ENCODE measurements at regions of chr2 and their contacts with region 1.

Region 1: GRCh38 chr2:23926750-23927571 is at the start of gene ATAD2B:
- DNase-seq: peak; percentile 96
- H3K4me3 ChIP-seq: peak within 1 kb of the TSS; percentile 89
- H3K27ac ChIP-seq: peak within 1 kb of the TSS; percentile 76
- H3K4me1 ChIP-seq: peaks cover 37% of the 10 kb centered on the region
- CTCF ChIP-seq: peak; percentile 80
- total RNA-seq, gene ATAD2B: 7.8 and 9.4 TPM in 2 replicates

Region 2: GRCh38 chr2:23824777-23825212 is 102.2 kb before region 1 on chr2:
- CTCF ChIA-PET with region 1: interaction called, 11 read pairs
- POLR2A ChIA-PET with region 1: interaction called, 32 read pairs
- intact Hi-C with region 1: loop called (anchors 1 kb)
- DNase-seq: peak; percentile 73
- H3K4me3 ChIP-seq: no peak overlapping the region
- H3K27ac ChIP-seq: no peak overlapping the region
- H3K4me1 ChIP-seq: peaks cover 7% of the 10 kb centered on the region
- CTCF ChIP-seq: peak; percentile 93

Region 3: GRCh38 chr2:23939987-23940717 is 13.2 kb after region 1 on chr2 and contains the start of gene UBXN2A:
- CTCF ChIA-PET with region 1: interaction called, 15 read pairs
- POLR2A ChIA-PET with region 1: interaction called, 50 read pairs
- intact Hi-C with region 1: loop called (anchors 1 kb)
- DNase-seq: peak; percentile 89
- H3K4me3 ChIP-seq: peak within 1 kb of the TSS; percentile 72
- H3K27ac ChIP-seq: peak within 1 kb of the TSS; percentile 73
- H3K4me1 ChIP-seq: peaks cover 18% of the 10 kb centered on the region
- CTCF ChIP-seq: no peak
- total RNA-seq, gene UBXN2A: 10.0 and 11.3 TPM in 2 replicates

Region 4: DNA sequence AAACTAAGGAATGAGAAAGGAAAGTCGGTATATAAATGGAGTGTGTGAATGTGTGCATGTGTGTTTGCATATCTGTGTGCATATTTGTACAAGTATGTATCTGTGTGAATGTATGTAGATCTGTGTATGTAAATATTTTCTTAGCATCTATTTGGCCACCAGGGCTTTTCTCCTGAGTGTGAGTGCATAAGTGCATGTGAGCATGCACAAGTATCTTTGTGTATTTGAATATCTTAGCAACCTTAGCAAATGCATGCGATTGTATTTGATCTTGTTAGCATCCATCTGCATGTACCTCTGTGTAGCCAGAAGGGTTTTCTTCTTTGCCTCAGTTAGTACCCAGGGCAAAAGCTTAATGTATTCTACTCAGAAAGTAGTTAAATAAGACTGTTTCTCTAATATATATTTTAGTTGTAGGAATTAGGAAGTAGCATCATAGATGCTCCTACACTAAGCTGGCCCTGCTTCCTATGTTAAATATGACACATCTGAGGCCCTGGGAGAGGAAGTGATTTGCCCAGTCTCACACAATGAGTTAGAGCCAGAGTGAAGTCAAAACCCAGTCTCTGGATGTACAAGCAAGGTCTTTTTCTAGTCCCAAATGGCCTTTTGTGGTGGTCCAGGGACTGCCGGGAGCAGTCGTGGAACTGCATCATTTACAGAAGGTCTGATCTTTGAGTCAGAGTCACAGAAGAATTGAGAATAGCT is 131.8 kb after region 1 on chr2:
- CTCF ChIA-PET with region 1: no interaction called
- POLR2A ChIA-PET with region 1: no interaction called
- intact Hi-C with region 1: loop called (anchors 5 kb)
- DNase-seq: no peak
- H3K4me3 ChIP-seq: no peak overlapping the region
- H3K27ac ChIP-seq: no peak overlapping the region
- H3K4me1 ChIP-seq: no peaks in the 10 kb centered on the region
- CTCF ChIP-seq: no peak

Region 5: DNA sequence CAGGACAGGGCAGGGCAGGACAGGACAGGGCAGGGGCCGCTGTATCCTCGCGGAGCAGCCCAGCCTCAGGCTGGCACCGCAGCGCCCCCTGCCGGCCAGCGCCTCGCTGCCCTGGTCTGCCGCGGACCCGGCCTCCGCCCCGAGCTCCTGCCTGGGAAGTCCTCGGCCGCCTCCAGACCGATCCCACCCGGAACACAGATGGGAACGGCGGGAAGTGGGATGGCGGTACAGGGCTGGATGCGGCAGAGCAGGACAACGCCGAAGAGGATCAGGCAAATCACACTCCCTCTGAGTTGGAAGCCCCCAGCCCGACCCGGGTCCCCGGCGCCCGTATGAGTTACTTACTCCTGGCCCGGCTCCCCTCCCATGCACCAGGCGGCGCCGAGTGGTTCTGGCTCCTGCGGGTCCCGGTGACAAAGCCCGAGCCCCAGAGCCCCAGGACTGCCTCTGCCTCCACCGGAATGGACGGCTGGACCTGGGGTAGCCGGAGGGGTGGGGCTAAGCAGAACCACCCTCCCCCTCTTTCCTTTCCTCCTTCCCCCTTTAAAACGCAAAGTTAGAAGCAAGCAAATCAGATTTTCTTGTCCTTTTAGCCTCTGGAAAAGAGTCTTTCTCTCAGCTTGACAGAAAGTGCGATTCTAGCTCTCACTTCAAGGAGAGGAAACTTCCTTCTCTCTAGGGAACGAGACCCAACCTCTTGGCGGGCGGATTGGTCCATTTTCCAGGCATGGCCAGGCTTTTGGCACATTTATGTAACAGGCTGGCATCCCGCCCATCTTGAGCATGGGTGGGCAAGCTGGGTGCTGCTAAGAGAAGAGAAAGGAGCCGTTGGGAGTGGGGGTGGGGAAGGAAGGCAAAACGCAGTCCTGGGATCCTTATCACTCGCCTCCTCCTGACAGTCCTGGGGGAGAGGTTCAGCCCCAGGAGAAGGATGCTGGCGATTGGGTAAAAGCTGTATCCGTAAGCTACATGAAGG is 157.7 kb after region 1 on chr2 and contains the start of gene TP53I3:
- CTCF ChIA-PET with region 1: interaction called, 3 read pairs
- POLR2A ChIA-PET with region 1: interaction called, 13 read pairs
- intact Hi-C with region 1: loop called (anchors 2 kb)
- DNase-seq: peak; percentile 75
- H3K4me3 ChIP-seq: peak within 1 kb of the TSS; percentile 67
- H3K27ac ChIP-seq: peak within 1 kb of the TSS; percentile 31
- H3K4me1 ChIP-seq: peaks cover 15% of the 10 kb centered on the region
- CTCF ChIP-seq: peak; percentile 89
- total RNA-seq, gene TP53I3: 0.36 and 0.38 TPM in 2 replicates

Region 6: GRCh38 chr2:24360050-24360962 is 433.3 kb after region 1 on chr2 and contains the start of gene ITSN2:
- CTCF ChIA-PET with region 1: no interaction called
- POLR2A ChIA-PET with region 1: no interaction called
- intact Hi-C with region 1: loop called (anchors 2 kb)
- DNase-seq: peak; percentile 84
- H3K4me3 ChIP-seq: peak within 1 kb of the TSS; percentile 91
- H3K27ac ChIP-seq: peak within 1 kb of the TSS; percentile 59
- H3K4me1 ChIP-seq: peaks cover 18% of the 10 kb centered on the region
- CTCF ChIP-seq: no peak
- total RNA-seq, gene ITSN2: 25.4 and 28.8 TPM in 2 replicates